HepG2 (cell line): ENCODE measurements at regions of chr9 and their contacts with region 1.

Region 1: DNA sequence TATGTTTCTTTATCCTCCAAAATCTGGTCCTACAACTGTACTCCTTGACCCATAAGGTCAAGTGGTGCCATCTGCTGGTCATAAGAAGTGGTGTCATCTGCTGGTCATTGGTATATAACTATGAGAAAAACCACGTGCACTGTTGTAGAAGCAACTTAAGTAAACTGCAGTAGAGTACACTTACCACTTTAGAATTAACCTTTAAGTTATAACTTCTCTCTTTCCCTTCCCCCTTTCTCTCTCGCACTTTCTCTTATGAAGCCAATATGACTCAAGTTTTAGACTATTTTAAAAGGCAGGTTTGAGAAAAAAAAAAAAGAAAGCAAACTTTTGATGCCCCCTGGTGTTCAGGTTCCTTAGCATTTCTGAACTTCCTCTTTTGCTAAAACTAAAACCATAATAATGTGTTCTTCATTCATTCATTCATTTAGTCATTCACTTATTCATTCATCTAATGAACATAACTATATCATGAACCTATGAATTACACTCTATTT is 12.8 kb upstream of the MTAP start:
- DNase-seq: peak; percentile 83
- ATAC-seq: peak; percentile 99
- H3K4me3 ChIP-seq: peak overlapping the region in 1 of 3 experiments; percentile 32; a peak in 1 of 6 replicates
- H3K27ac ChIP-seq: no peak overlapping the region
- H3K4me1 ChIP-seq: no peaks in the 10 kb centered on the region
- H3K27me3 ChIP-seq: no peaks in the 10 kb centered on the region
- CTCF ChIP-seq: peak; percentile 79
- EP300 ChIP-seq: no peak
- POLR2A ChIP-seq: no peak
- RAD21 ChIP-seq: peak; percentile 37; the same call in 1 of the 2 replicates

Region 2: GRCh38 chr9:21239911-21240310 is 549.7 kb before region 1 on chr9 and contains the start of gene IFNA14:
- CTCF ChIA-PET with region 1: interaction called, 11 read pairs
- POLR2A ChIA-PET with region 1: no interaction called
- in situ Hi-C with region 1: no loop called
- intact Hi-C with region 1: loop called (anchors 1 kb)
- DNase-seq: no peak
- ATAC-seq: no peak
- H3K4me3 ChIP-seq: no peak within 1 kb of the TSS
- H3K27ac ChIP-seq: no peak within 1 kb of the TSS
- H3K4me1 ChIP-seq: no peaks in the 10 kb centered on the region
- H3K27me3 ChIP-seq: no peaks in the 10 kb centered on the region
- CTCF ChIP-seq: no peak
- EP300 ChIP-seq: no peak
- POLR2A ChIP-seq: no peak
- RAD21 ChIP-seq: no peak
- total RNA-seq, gene IFNA14: not detected in 2 replicates

Region 3: DNA sequence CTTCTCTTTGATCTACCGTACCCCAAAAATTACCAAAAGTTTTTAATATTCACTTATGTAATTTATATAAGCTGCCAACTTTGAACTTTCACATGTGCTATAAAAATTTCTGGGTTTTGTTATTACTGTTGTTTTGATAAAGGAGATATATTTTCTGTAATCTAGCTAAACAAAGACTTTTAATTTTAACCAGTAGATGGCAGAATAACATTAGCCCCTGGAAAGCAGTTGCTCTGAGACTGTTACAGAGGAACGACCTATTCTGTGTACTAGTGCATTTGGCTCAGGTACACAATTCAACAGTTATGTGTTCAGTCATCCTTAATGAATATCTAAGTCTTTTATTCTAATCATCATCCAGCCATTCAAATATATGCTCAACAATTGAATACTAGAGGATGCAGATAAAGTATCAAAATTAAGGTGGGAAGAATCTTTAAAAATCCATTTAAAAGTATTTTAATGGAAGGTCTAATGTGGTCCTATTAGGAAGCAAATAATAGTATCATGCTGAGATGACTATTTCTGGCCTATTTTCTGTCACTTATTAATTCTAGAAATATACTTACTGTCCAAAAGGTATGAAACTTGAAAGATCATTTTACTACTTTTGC is 463.0 kb before region 1 on chr9:
- CTCF ChIA-PET with region 1: interaction called, 4 read pairs
- POLR2A ChIA-PET with region 1: no interaction called
- in situ Hi-C with region 1: loop called (anchors 10 kb)
- intact Hi-C with region 1: loop called (anchors 2 kb)
- DNase-seq: peak; percentile 39
- ATAC-seq: peak; percentile 90
- H3K4me3 ChIP-seq: no peak overlapping the region
- H3K27ac ChIP-seq: no peak overlapping the region
- H3K4me1 ChIP-seq: peaks cover 3% of the 10 kb centered on the region; the same call in 1 of the 2 replicates
- H3K27me3 ChIP-seq: no peaks in the 10 kb centered on the region
- CTCF ChIP-seq: peak; percentile 66
- EP300 ChIP-seq: no peak
- POLR2A ChIP-seq: no peak
- RAD21 ChIP-seq: 0 out of 2 replicates have a peak, but pooled peaks have one; percentile 21

Region 4: DNA sequence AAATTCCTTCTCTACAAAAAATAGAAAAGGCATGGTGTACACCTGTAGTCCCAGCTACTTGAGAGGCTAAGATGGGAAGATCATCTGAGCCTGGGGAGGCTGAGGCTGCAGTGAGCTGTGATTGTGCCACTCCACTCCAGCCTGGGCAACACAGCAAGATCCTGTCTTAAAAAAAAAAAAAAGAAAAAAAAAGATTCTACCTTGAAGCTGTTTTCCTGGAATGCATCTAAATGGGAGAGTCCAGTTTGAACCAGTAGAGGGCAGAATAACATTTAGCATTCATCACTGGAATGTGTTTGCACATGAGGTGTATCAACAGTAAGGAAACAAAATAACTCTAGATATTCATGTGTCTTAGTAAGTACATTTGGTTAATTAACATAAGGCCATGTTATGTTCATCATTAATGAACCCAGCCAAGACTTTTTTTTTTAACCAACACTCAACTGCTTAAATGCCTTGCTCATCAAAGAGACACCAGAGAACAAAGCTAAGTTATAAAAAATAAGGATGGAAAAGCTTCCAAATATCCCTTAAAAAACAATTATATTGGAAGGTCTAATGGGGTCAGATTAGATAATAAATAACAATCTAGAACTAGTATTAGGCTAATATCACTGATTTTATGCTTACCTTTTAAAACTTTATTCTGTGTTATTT is 323.6 kb before region 1 on chr9:
- CTCF ChIA-PET with region 1: interaction called, 35 read pairs
- POLR2A ChIA-PET with region 1: no interaction called
- in situ Hi-C with region 1: loop called (anchors 10 kb)
- intact Hi-C with region 1: loop called (anchors 1 kb)
- DNase-seq: peak; percentile 55
- ATAC-seq: peak; percentile 84
- H3K4me3 ChIP-seq: no peak overlapping the region
- H3K27ac ChIP-seq: no peak overlapping the region
- H3K4me1 ChIP-seq: peaks cover 5% of the 10 kb centered on the region; the same call in 1 of the 2 replicates
- H3K27me3 ChIP-seq: no peaks in the 10 kb centered on the region
- CTCF ChIP-seq: peak; percentile 64
- EP300 ChIP-seq: no peak
- POLR2A ChIP-seq: no peak
- RAD21 ChIP-seq: no peak

Region 5: DNA sequence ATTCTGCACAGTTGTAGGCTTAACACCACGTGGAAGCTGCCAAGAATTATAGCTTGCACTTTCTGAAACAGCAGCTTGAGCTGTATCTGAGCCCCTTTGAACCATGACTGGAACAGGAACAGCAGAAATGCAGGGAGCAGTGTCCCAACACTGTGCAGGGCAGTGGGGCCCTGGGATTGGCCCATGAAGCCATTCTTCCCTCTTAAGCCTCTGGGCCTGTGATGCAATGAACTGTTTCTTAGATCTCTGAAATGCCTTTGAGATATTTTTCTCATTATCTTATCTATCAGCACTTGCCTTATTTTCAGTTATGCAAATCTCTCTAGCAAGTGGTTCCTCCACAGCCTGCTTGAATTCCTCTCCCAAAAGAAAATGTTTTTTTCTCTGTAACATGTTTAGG is 74.2 kb before region 1 on chr9:
- CTCF ChIA-PET with region 1: no interaction called
- POLR2A ChIA-PET with region 1: no interaction called
- in situ Hi-C with region 1: no loop called
- intact Hi-C with region 1: no loop called
- DNase-seq: no peak
- ATAC-seq: no peak
- H3K4me3 ChIP-seq: no peak overlapping the region
- H3K27ac ChIP-seq: no peak overlapping the region
- H3K4me1 ChIP-seq: no peaks in the 10 kb centered on the region
- H3K27me3 ChIP-seq: no peaks in the 10 kb centered on the region
- CTCF ChIP-seq: no peak
- EP300 ChIP-seq: no peak
- POLR2A ChIP-seq: no peak
- RAD21 ChIP-seq: no peak